Vagina (tissue), 2 donors: ENCODE measurements at regions of chr7 and their contacts with region 1.

Region 1: GRCh38 chr7:79512261-79512660 is 58.8 kb upstream of the MAGI2 start:
- DNase-seq: no peak
- H3K4me3 ChIP-seq: no peak overlapping the region
- H3K27ac ChIP-seq: no peak overlapping the region
- H3K4me1 ChIP-seq: no peaks in the 10 kb centered on the region
- H3K27me3 ChIP-seq: no peaks in the 10 kb centered on the region
- CTCF ChIP-seq: no peak
- POLR2A ChIP-seq: no peak

Region 2: DNA sequence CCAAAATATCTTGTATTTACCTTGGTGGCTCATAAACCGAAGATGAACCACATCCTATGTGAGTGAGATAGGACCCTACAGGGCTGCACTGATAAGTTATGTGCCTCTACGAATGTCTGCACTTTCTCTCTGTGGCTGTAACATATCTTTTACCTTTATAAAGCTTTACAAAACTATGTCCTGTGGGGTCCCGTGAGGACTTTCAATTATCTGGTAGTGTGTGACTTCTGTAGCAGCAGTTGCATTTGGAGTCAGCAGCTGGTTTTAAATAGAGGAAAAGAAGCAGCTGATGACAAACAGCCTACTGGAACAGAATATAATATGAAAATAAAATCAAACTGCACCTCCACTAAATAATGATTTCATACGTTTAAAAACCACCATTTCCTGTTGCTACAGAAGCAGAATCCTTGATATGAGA is 400.0 kb after region 1 on chr7:
- intact Hi-C with region 1: loop called (anchors 10 kb)
- DNase-seq: no peak
- H3K4me3 ChIP-seq: no peak overlapping the region
- H3K27ac ChIP-seq: no peak overlapping the region
- H3K4me1 ChIP-seq: no peaks in the 10 kb centered on the region
- H3K27me3 ChIP-seq: no peaks in the 10 kb centered on the region
- CTCF ChIP-seq: no peak
- POLR2A ChIP-seq: no peak

Region 3: GRCh38 chr7:79968077-79968648 is 455.9 kb after region 1 on chr7:
- intact Hi-C with region 1: no loop called
- DNase-seq: no peak
- H3K4me3 ChIP-seq: no peak overlapping the region
- H3K27ac ChIP-seq: no peak overlapping the region
- H3K4me1 ChIP-seq: no peaks in the 10 kb centered on the region
- H3K27me3 ChIP-seq: no peaks in the 10 kb centered on the region
- CTCF ChIP-seq: no peak
- POLR2A ChIP-seq: no peak